ENCODE measurements at regions of chr10 and their contacts with region 1.

Region 1: GRCh38 chr10:62244780-62245467 is 23.7 kb downstream of the RTKN2 start:
- DNase-seq: peak; percentile 70 to 82
- H3K4me3 ChIP-seq: no peak overlapping the region
- H3K4me3 Mint-ChIP-seq: no peak overlapping the region
- H3K27ac Mint-ChIP-seq: peak overlapping the region; percentile 33
- H3K4me1 ChIP-seq: peaks cover 25% of the 10 kb centered on the region
- H3K4me1 Mint-ChIP-seq: peaks cover 39% of the 10 kb centered on the region
- H3K27me3 ChIP-seq: no peaks in the 10 kb centered on the region
- H3K27me3 Mint-ChIP-seq: no peaks in the 10 kb centered on the region
- CTCF ChIP-seq: peak; percentile 95 to 98

Region 2: GRCh38 chr10:61606951-61607907 is 637.7 kb before region 1 on chr10:
- CTCF ChIA-PET with region 1: no interaction called
- POLR2A ChIA-PET with region 1: no interaction called
- intact Hi-C with region 1: loop called (anchors 10 kb)
- DNase-seq: no peak
- H3K4me3 ChIP-seq: no peak overlapping the region
- H3K4me3 Mint-ChIP-seq: no peak overlapping the region
- H3K27ac Mint-ChIP-seq: no peak overlapping the region
- H3K4me1 ChIP-seq: no peaks in the 10 kb centered on the region
- H3K4me1 Mint-ChIP-seq: no peaks in the 10 kb centered on the region
- H3K27me3 ChIP-seq: no peaks in the 10 kb centered on the region
- H3K27me3 Mint-ChIP-seq: peaks cover 30% of the 10 kb centered on the region
- CTCF ChIP-seq: peak; percentile 80 to 88

Region 3: DNA sequence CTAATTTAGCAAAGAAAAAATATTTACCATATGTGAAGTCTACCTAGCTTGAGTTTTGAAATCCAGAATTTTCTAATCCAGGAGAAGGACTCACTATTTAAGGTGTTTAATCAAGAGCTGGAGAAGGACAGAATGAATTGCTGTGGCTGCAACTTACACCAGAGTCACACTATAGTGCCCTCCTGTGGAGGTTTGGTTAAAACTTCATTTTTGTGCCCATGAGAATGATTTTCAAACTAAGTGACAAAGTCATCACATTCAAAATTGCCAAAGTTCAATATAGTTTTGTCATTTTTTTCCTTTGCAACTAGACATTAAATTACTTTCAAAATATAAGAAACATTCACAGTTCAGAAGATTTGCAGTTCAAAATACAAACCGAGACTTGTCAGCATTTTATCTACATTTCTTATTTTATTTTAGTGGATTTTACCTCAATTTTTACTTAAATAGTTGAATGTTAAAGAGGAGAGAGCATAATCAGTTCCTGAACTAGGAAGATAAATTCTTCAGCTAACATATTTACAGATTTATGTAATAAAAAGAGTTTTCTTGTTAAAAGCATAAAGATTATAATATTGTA is 511.5 kb before region 1 on chr10:
- CTCF ChIA-PET with region 1: interaction called, 3 read pairs
- POLR2A ChIA-PET with region 1: no interaction called
- intact Hi-C with region 1: loop called (anchors 1 kb)
- DNase-seq: peak in 1 of 2 experiments; percentile 71
- H3K4me3 ChIP-seq: no peak overlapping the region
- H3K4me3 Mint-ChIP-seq: no peak overlapping the region
- H3K27ac Mint-ChIP-seq: no peak overlapping the region
- H3K4me1 ChIP-seq: no peaks in the 10 kb centered on the region
- H3K4me1 Mint-ChIP-seq: peaks cover 7% of the 10 kb centered on the region
- H3K27me3 ChIP-seq: no peaks in the 10 kb centered on the region
- H3K27me3 Mint-ChIP-seq: peaks cover 10% of the 10 kb centered on the region
- CTCF ChIP-seq: peak; percentile 80 to 87

Region 4: DNA sequence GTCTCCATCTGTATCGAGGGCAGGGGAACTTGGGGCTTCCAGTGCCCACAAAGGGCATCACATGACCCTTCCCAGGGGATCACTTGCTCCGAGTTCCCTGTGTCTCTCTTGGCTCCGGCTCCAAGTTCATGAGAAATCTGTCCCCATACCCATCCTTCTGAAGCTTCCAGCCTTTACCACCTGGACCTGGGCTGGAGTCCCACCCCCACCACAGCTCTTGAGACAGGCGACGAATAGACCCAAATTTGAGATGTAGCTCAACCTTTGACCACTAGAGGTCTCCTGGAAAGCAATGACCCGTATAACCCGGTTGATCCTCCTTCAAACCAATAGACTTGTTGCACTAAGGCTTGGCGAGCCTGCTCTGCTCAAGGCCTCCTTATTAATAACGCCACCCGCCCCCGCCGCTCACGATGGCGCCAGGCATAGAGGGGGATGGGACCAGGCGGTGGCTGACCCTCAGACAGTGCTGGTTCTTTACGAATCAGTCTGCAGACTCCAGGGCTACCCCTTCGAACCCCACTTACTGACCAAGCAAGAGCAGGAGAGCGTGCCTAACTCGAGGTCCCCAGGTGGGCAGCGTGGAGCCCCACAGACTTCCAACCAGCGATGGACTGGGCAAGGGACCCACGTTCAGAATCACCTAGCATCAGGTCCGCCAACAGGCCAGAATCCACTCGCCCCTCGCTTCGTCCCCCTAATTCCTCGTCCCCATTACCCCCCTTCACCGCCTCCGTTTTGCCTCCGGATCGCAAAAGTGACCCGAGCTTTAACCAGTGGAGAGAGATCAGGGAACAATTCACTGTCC is 347.9 kb before region 1 on chr10:
- CTCF ChIA-PET with region 1: interaction called, 3 read pairs
- POLR2A ChIA-PET with region 1: no interaction called
- intact Hi-C with region 1: loop called (anchors 1 kb)
- DNase-seq: peak; percentile 78 to 83
- H3K4me3 ChIP-seq: no peak overlapping the region
- H3K4me3 Mint-ChIP-seq: no peak overlapping the region
- H3K27ac Mint-ChIP-seq: peak overlapping the region; percentile 99
- H3K4me1 ChIP-seq: peaks cover 42% of the 10 kb centered on the region
- H3K4me1 Mint-ChIP-seq: peaks cover 32% of the 10 kb centered on the region
- H3K27me3 ChIP-seq: no peaks in the 10 kb centered on the region
- H3K27me3 Mint-ChIP-seq: no peaks in the 10 kb centered on the region
- CTCF ChIP-seq: peak; percentile 71 to 88

Region 5: DNA sequence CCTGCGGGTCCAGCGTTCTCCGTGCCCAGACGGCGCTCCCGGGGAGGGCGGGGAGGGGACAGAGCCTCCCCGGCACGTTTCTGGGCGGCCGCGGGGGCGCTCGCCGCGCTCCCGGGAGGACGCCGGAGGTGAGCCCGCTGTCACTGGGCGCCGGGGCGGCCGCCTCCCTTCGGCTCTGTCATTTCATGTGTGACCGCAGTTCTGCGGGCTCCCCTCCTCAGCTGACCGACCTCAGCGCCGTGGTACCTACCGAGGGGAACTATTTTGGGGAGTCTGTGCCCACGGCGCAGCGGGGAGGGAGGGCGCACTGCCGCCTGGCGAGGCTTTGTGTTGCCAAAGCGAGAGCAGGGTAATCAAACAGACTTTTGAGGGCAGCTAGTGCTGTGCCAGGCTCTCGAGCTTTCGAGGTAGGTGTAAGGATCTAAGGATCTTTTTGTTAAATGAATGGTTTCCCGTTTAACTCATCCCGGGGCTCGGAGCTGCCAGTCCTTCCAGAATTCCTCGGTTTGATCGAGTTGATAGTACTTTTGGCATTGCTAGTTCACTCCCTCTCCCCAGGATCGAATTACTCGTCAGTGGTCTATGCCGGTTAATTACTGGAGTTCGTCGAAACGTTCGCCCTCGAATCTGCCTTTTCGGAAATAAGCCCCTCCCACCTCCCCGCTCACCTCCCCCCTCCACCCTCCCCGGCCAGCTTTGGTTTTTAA is 341.6 kb before region 1 on chr10:
- CTCF ChIA-PET with region 1: interaction called, 5 read pairs
- POLR2A ChIA-PET with region 1: no interaction called
- intact Hi-C with region 1: loop called (anchors 2 kb)
- DNase-seq: peak in 1 of 2 experiments; percentile 84
- H3K4me3 ChIP-seq: peak overlapping the region; percentile 97
- H3K4me3 Mint-ChIP-seq: peak overlapping the region; percentile 89
- H3K27ac Mint-ChIP-seq: peak overlapping the region; percentile 99
- H3K4me1 ChIP-seq: peaks cover 57% of the 10 kb centered on the region
- H3K4me1 Mint-ChIP-seq: peaks cover 34% of the 10 kb centered on the region
- H3K27me3 ChIP-seq: no peaks in the 10 kb centered on the region
- H3K27me3 Mint-ChIP-seq: no peaks in the 10 kb centered on the region
- CTCF ChIP-seq: peak; percentile 14 to 16

Region 6: DNA sequence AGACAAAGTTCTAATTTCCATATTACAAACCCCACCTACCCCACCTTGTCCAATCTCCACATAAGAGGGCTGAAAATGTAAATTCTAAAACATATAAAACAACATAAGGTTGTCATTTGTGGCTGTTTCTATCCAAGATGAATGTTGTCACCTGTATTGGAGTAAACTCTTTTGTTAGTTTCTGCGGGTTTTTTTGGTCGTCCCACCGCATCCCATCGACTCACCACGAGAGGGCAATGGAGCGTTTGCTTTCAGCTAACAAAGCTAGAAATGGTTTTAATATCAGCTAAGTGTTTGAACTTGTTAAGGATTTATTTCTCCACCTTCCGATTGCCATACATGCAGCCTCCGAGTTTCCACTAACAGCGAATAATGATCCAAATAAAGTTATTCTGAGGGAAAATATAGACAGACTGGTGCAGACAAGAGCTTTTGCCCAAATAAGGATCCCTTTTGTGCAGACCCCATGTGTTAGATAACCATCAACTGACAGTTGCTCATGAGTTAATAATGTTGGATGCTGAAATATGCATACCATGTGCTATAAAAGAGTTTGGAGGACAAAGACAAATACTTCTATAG is 206.2 kb before region 1 on chr10:
- CTCF ChIA-PET with region 1: interaction called, 58 read pairs
- POLR2A ChIA-PET with region 1: no interaction called
- intact Hi-C with region 1: loop called (anchors 1 kb)
- DNase-seq: peak; percentile 84 to 85
- H3K4me3 ChIP-seq: no peak overlapping the region
- H3K4me3 Mint-ChIP-seq: peak overlapping the region; percentile 50
- H3K27ac Mint-ChIP-seq: peak overlapping the region; percentile 56
- H3K4me1 ChIP-seq: peaks cover 95% of the 10 kb centered on the region
- H3K4me1 Mint-ChIP-seq: peaks cover 93% of the 10 kb centered on the region
- H3K27me3 ChIP-seq: no peaks in the 10 kb centered on the region
- H3K27me3 Mint-ChIP-seq: no peaks in the 10 kb centered on the region
- CTCF ChIP-seq: peak; percentile 93 to 98

Region 7: DNA sequence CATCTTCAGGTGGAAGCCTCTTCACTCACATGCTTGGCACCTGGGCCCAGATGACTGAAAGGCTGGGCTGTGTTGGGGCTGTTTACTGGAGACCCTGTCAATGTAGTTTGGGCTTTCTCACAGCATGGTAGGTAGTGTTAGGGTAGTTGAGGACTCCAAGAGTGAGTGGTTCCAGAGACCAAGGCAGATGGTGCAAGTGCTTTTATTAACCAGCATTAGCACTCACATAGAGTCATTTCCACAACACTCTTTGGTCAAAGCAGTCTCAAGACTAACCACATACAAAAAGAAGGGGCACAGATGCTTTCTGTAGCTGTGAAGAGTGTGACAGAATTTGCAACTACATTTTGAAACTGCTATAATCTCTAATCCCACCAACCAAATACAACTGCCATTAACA is 111.3 kb before region 1 on chr10:
- CTCF ChIA-PET with region 1: no interaction called
- POLR2A ChIA-PET with region 1: no interaction called
- intact Hi-C with region 1: no loop called
- DNase-seq: no peak
- H3K4me3 ChIP-seq: no peak overlapping the region
- H3K4me3 Mint-ChIP-seq: no peak overlapping the region
- H3K27ac Mint-ChIP-seq: no peak overlapping the region
- H3K4me1 ChIP-seq: no peaks in the 10 kb centered on the region
- H3K4me1 Mint-ChIP-seq: no peaks in the 10 kb centered on the region
- H3K27me3 ChIP-seq: no peaks in the 10 kb centered on the region
- H3K27me3 Mint-ChIP-seq: no peaks in the 10 kb centered on the region
- CTCF ChIP-seq: no peak

Region 8: GRCh38 chr10:62149621-62150020 is 95.3 kb before region 1 on chr10:
- CTCF ChIA-PET with region 1: no interaction called
- POLR2A ChIA-PET with region 1: no interaction called
- intact Hi-C with region 1: loop called (anchors 1 kb)
- DNase-seq: no peak
- H3K4me3 ChIP-seq: no peak overlapping the region
- H3K4me3 Mint-ChIP-seq: no peak overlapping the region
- H3K27ac Mint-ChIP-seq: no peak overlapping the region
- H3K4me1 ChIP-seq: peaks cover 2% of the 10 kb centered on the region; the same call in 1 of the 2 replicates
- H3K4me1 Mint-ChIP-seq: peaks cover 11% of the 10 kb centered on the region
- H3K27me3 ChIP-seq: no peaks in the 10 kb centered on the region
- H3K27me3 Mint-ChIP-seq: no peaks in the 10 kb centered on the region
- CTCF ChIP-seq: no peak

Region 9: GRCh38 chr10:62594093-62594520 is 349.2 kb after region 1 on chr10:
- CTCF ChIA-PET with region 1: no interaction called
- POLR2A ChIA-PET with region 1: no interaction called
- intact Hi-C with region 1: no loop called
- DNase-seq: peak; percentile 68 to 82
- H3K4me3 ChIP-seq: no peak overlapping the region
- H3K4me3 Mint-ChIP-seq: no peak overlapping the region
- H3K27ac Mint-ChIP-seq: no peak overlapping the region
- H3K4me1 ChIP-seq: no peaks in the 10 kb centered on the region
- H3K4me1 Mint-ChIP-seq: no peaks in the 10 kb centered on the region
- H3K27me3 ChIP-seq: no peaks in the 10 kb centered on the region
- H3K27me3 Mint-ChIP-seq: peaks cover 12% of the 10 kb centered on the region
- CTCF ChIP-seq: peak; percentile 99

Measured in Caco-2 (cell line).